ENCODE measurements at regions of chr11 and their contacts with region 1.

Region 1: DNA sequence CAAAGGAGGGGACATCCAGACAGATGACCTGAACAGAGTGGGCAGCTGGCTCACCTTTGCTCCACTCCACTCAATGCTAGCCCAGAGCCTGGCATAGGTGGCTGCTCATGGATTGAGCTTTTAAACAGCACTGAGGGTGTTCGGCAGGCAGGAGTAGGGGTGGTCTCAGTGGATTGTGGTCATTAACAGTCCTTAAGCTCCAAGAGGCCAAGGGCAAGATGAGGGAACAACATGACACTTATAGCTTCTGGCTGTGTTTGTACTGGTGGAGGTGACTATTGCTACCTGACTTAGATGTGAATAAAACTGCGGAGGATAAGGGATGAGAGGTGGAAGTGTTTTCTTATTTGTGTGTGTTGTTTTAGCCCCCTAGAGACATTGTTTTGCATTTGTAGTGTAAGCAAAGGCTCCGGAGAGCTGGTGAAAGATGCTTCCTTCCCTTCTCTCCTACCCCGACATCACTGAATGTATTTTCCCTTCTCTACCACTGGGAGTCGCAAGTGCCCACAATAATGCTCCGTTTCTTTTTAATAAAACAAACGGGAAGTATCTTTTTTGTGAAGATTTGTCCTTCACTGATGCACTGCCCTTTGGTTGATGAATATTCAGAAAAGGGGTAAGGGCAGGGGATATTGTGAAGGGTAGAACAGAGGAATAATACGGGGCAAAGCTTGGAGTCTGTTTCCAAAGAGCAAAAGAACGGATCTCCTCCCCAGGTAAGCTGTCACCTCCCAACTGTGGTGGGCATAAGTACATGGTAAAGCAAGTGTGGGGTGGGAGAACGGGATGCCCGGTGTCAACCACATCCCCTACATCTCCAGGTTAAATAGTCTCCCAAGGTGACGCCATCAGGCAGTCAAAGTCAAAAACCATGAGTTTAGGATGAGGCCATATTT is 27.5 kb upstream of the MTNR1B start:
- DNase-seq: peak; percentile 63
- H3K27ac ChIP-seq: no peak overlapping the region
- CTCF ChIP-seq: peak; percentile 73

Region 2: DNA sequence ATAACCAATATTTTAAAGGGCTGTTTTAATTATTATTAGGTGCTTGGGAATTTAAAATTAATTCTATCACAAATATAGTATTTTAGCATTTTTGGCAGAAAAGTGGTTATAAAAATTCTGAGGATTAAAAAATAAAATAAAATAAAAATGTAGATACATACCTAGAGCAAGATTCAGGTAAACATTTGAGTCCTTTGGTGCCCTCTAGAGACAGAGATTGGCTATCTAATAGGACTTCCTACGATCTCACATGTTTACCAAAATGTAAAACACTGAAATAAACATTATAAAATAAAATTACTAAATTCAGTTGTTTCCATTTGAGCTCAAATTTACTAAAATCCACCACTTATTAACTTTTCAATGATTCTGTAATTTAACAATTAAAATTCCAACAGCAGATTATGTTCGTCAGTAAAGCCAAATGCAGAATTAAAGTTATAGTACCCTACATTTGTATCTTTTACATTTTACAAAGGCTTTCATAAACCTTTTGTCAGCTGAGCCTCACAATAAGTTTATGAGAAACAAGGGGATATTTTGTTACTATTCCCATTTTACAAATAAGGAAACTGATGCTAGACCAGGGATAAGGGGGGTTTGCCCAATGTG is 228.1 kb after region 1 on chr11:
- CTCF ChIA-PET with region 1: interaction called, 10 read pairs
- POLR2A ChIA-PET with region 1: no interaction called
- DNase-seq: peak; percentile 9
- H3K27ac ChIP-seq: no peak overlapping the region
- CTCF ChIP-seq: peak; percentile 45; the same call in 1 of the 2 replicates